OCI-LY7 (cell line): ENCODE measurements at regions of chr4 and their contacts with region 1.

Region 1: GRCh38 chr4:10116580-10117358 is at the start of gene WDR1:
- DNase-seq: peak; percentile 92
- H3K4me3 ChIP-seq: peak within 1 kb of the TSS; percentile 73
- H3K27ac ChIP-seq: peak within 1 kb of the TSS; percentile 69
- H3K4me1 ChIP-seq: peaks cover 27% of the 10 kb centered on the region
- CTCF ChIP-seq: no peak
- total RNA-seq, gene WDR1: 77.6 and 85.0 TPM in 2 replicates

Region 2: GRCh38 chr4:10134141-10134540 is 17.4 kb after region 1 on chr4:
- CTCF ChIA-PET with region 1: no interaction called
- POLR2A ChIA-PET with region 1: interaction called, 14 read pairs
- intact Hi-C with region 1: no loop called
- DNase-seq: no peak
- H3K4me3 ChIP-seq: no peak overlapping the region
- H3K27ac ChIP-seq: no peak overlapping the region
- H3K4me1 ChIP-seq: no peaks in the 10 kb centered on the region
- CTCF ChIP-seq: no peak

Region 3: GRCh38 chr4:10456595-10457254 is 340.0 kb after region 1 on chr4:
- CTCF ChIA-PET with region 1: no interaction called
- POLR2A ChIA-PET with region 1: no interaction called
- intact Hi-C with region 1: loop called (anchors 1 kb)
- DNase-seq: peak; percentile 70
- H3K4me3 ChIP-seq: peak overlapping the region; percentile 77
- H3K27ac ChIP-seq: no peak overlapping the region
- H3K4me1 ChIP-seq: peaks cover 25% of the 10 kb centered on the region
- CTCF ChIP-seq: no peak